ENCODE measurements at regions of chr10 and their contacts with region 1.

Region 1: DNA sequence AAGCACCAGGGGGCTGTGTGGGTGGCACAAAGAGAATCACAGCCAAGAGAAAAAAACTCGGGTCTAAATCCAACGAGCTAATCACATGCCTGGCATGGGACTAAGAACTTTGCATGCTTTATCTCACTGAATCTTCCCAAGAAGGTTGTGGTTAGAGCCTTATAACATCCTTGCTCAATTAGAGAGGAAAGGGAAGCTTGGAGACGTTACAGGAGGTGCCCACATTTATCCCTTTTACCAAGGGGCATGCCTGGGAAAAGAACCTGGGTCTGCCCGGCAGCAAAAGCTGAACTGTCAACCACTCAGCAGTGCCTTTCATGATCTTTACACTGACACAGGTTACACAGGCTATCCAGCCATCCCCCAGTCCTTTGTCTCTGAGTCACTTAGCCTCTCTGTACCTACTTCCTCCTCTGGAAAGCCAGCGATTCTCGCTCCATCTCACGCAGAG is 190.1 kb downstream of the PRPF18 start:
- DNase-seq: no peak
- H3K4me3 ChIP-seq: no peak overlapping the region
- H3K27ac ChIP-seq: no peak overlapping the region
- H3K4me1 ChIP-seq: peaks cover 23% of the 10 kb centered on the region
- H3K27me3 ChIP-seq: no peaks in the 10 kb centered on the region
- CTCF ChIP-seq: no peak

Region 2: DNA sequence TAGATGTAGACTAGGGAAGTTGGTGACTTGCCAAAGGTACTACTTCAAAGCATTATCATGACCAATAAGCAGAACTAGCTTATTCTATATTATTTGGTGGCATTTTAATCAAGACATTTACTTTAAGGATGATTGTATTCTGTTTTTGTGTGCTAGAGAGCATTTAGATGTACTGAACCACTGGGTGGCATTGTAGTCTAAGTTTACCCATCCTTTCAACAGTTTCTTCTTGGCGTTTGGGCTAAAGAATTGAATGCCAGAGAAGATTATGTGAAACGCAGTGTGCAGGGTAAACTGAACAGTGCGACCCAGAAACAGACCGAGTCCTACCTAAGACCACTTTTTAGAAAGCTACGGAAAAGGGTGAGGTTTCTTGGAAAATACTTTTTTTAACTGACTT is 163.4 kb before region 1 on chr10:
- intact Hi-C with region 1: loop called (anchors 5 kb)
- DNase-seq: no peak
- H3K4me3 ChIP-seq: no peak overlapping the region
- H3K27ac ChIP-seq: no peak overlapping the region
- H3K4me1 ChIP-seq: peaks cover 17% of the 10 kb centered on the region
- H3K27me3 ChIP-seq: no peaks in the 10 kb centered on the region
- CTCF ChIP-seq: peak; percentile 61

Region 3: DNA sequence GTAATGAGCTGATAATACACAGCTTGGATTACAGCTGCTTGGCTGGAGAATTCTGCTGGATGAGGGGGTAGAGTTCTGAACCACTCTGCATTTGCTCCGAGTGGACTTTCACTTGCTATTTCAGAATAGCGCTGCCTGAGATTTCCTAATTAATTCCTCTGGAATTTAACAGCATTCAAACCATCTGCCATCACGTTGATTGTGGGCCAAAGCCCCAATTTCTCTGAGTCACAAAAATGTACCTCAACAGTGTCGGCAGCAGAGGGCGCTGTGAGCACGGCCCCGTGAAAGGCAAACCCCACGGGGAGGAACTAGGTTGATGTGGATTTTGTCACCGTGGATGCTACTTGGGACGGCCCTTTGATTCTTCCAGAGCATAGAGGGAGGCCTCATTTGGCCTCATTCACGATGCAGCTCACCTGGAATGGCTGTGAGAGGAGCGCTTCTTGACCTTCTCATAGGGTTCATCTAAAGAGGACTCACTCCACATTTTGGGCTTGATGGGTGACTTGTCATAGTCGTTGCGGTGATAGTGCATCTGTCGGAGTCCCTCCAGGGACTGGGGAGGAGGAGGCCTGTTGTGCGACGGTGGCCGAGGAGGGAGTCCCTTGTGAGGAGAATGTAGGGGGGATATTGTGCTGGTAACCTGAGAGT is 116.9 kb before region 1 on chr10:
- intact Hi-C with region 1: loop called (anchors 2 kb)
- DNase-seq: peak; percentile 78
- H3K4me3 ChIP-seq: no peak overlapping the region
- H3K27ac ChIP-seq: peak overlapping the region; percentile 79
- H3K4me1 ChIP-seq: peaks cover 49% of the 10 kb centered on the region
- H3K27me3 ChIP-seq: no peaks in the 10 kb centered on the region
- CTCF ChIP-seq: peak; percentile 97

Region 4: GRCh38 chr10:13712837-13713581 is 63.9 kb before region 1 on chr10:
- intact Hi-C with region 1: loop called (anchors 10 kb)
- DNase-seq: peak; percentile 84
- H3K4me3 ChIP-seq: no peak overlapping the region
- H3K27ac ChIP-seq: peak overlapping the region; percentile 63
- H3K4me1 ChIP-seq: peaks cover 81% of the 10 kb centered on the region
- H3K27me3 ChIP-seq: no peaks in the 10 kb centered on the region
- CTCF ChIP-seq: no peak